ENCODE measurements at regions of chr14 and their contacts with region 1.

Region 1: GRCh38 chr14:39114073-39114838 is at the start of gene GEMIN2:
- DNase-seq: peak; percentile 62
- H3K4me3 ChIP-seq: peak within 1 kb of the TSS; percentile 68 to 79 (median 71)
- H3K27ac ChIP-seq: peak within 1 kb of the TSS; percentile 81 to 92 (median 84)
- H3K4me1 ChIP-seq: peaks cover 6 to 30% (median 7%) of the 10 kb centered on the region in 3 donors
- H3K27me3 ChIP-seq: no peaks in the 10 kb centered on the region
- CTCF ChIP-seq: no peak
- POLR2A ChIP-seq: peak in 2 of 4 donors; percentile 49 to 66
- total RNA-seq, gene GEMIN2: 9.7 to 19.8 (median 19.0) TPM

Region 2: GRCh38 chr14:39169541-39169900 is 55.3 kb after region 1 on chr14:
- intact Hi-C with region 1: loop called (anchors 10 kb)
- DNase-seq: no peak
- H3K4me3 ChIP-seq: peak overlapping the region; percentile 74 to 93 (median 86)
- H3K27ac ChIP-seq: peak overlapping the region; percentile 95 to 99 (median 96)
- H3K4me1 ChIP-seq: peaks cover 9 to 46% (median 17%) of the 10 kb centered on the region in 3 donors
- H3K27me3 ChIP-seq: no peaks in the 10 kb centered on the region
- CTCF ChIP-seq: no peak
- POLR2A ChIP-seq: no peak